PC-9 (cell line): ENCODE measurements at regions of chr15 and their contacts with region 1.

Region 1: DNA sequence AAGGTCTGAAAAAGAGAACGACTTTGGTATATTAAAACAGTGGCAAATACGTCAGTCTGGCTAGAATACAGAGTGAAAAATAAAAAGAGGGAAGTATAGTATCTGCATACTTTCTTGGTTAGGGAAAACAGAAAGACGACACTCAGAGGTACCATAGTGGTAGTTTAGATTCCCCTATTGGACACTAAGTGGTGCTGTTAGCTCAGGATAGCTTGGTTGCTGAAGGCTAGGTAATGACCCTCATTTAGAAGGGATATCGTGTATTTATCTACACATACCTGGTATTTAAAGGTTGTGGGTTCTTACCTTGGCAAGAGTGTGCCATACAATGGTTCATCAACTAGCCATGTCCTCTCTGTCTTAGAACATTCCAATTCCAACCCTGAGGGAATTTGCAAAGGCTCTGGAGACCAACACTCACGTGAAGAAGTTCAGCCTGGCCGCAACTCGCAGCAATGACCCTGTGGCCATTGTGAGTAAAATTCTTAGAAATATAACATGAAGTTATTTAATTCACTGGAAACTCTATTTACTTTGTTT is 31.0 kb downstream of the TMOD2 start:
- DNase-seq: peak; percentile 7 to 52
- H3K4me3 ChIP-seq: no peak overlapping the region
- H3K27ac ChIP-seq: no peak overlapping the region
- H3K4me1 ChIP-seq: peaks cover 17% of the 10 kb centered on the region
- H3K27me3 ChIP-seq: no peaks in the 10 kb centered on the region
- CTCF ChIP-seq: peak; percentile 66

Region 2: DNA sequence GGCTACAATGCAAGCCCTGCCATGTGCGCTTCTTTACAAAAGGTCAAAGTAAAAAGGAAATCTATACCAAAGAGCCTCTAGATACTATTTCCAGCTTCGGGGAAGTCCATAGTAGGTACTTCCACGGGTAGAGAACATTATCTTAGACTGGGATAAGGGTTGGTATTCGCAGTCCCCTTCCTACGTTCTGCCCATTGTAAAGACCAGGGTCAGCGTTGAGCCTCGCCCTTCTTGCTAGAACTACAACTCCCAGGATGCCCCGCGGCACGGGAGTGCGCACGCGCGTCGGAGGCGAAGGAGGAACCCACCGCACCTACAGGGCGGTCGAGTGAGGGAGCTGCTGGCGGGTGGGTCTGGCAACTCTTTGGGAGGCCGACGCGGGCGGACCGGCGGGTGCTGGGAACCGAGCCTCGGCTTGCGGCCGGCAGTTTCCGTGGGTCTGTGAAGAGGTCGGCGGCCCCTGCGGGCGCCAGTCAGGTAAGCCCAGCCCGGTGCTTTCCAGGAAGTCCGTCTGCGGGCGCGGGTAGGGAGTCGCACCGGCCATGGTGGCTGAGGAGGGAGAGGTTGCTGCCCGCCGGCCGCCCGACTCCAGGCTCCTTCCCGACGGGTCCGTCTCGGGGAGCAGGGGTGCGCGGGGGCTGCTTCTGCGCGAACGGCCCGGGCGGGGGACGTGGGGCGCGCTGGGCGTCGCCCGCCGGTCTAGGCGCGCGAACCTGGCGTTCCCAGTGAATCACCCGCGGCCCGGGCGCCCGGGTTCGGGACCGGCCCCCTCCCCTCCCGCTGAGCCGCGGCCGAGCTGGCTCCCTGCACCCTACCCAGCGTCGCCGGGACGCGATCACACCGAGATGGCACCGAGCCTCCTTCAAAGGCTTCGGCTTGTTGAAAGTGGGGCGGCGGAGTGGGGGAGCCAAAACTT is 47.2 kb after region 1 on chr15 and contains the start of gene TMOD3:
- CTCF ChIA-PET with region 1: interaction called, 5 read pairs
- POLR2A ChIA-PET with region 1: interaction called, 13 read pairs
- intact Hi-C with region 1: loop called (anchors 1 kb)
- DNase-seq: peak; percentile 77 to 91
- H3K4me3 ChIP-seq: peak within 1 kb of the TSS; percentile 71
- H3K27ac ChIP-seq: peak within 1 kb of the TSS; percentile 97
- H3K4me1 ChIP-seq: peaks cover 69% of the 10 kb centered on the region
- H3K27me3 ChIP-seq: no peaks in the 10 kb centered on the region
- CTCF ChIP-seq: no peak
- total RNA-seq, gene TMOD3: 94.9 and 125 TPM in 2 replicates

Region 3: GRCh38 chr15:51849860-51850259 is 67.4 kb after region 1 on chr15:
- CTCF ChIA-PET with region 1: no interaction called
- POLR2A ChIA-PET with region 1: no interaction called
- intact Hi-C with region 1: no loop called
- DNase-seq: no peak
- H3K4me3 ChIP-seq: no peak overlapping the region
- H3K27ac ChIP-seq: no peak overlapping the region
- H3K4me1 ChIP-seq: peaks cover 32% of the 10 kb centered on the region
- H3K27me3 ChIP-seq: no peaks in the 10 kb centered on the region
- CTCF ChIP-seq: no peak

Region 4: GRCh38 chr15:51907136-51907914 is 124.9 kb after region 1 on chr15:
- CTCF ChIA-PET with region 1: interaction called, 8 read pairs
- POLR2A ChIA-PET with region 1: no interaction called
- intact Hi-C with region 1: loop called (anchors 1 kb)
- DNase-seq: peak; percentile 83 to 97
- H3K4me3 ChIP-seq: peak overlapping the region; percentile 26; the same call in 1 of the 2 replicates
- H3K27ac ChIP-seq: peak overlapping the region; percentile 69
- H3K4me1 ChIP-seq: peaks cover 27% of the 10 kb centered on the region
- H3K27me3 ChIP-seq: no peaks in the 10 kb centered on the region
- CTCF ChIP-seq: peak; percentile 60

Region 5: DNA sequence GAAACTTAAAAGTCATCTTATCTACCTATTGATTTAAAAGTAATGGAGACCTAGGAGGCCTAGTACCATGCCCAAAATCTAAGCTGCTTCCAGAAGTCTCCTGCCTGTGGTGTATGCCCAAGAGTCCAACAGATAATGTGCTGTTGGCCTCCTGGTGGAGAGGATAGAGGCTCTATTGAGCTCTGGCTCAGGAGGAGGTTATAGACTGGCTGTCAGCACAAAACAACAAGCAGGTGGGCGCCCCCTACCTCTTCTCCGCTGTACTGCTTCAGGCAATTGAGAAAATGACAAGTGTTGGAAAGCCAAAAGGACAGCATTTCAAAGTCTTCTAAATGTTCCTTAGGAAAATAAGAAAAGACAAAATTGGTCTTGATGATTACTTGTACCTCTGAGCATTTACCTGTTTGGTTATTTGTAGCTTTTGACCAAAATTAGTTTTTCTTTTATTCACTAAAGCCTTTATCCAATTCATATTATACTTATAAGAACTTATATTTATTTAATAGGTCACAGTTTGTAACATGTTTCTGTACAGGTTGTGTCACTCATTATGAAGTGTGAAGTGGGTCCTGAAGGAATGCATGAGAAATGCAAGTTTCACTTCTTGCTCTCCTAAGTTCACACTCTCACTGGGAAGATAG is 426.0 kb after region 1 on chr15:
- CTCF ChIA-PET with region 1: no interaction called
- POLR2A ChIA-PET with region 1: no interaction called
- intact Hi-C with region 1: loop called (anchors 10 kb)
- DNase-seq: peak; percentile 36 to 55
- H3K4me3 ChIP-seq: no peak overlapping the region
- H3K27ac ChIP-seq: no peak overlapping the region
- H3K4me1 ChIP-seq: no peaks in the 10 kb centered on the region
- H3K27me3 ChIP-seq: no peaks in the 10 kb centered on the region
- CTCF ChIP-seq: peak; percentile 81

Region 6: GRCh38 chr15:52735231-52736089 is 953.0 kb after region 1 on chr15:
- CTCF ChIA-PET with region 1: no interaction called
- POLR2A ChIA-PET with region 1: no interaction called
- intact Hi-C with region 1: loop called (anchors 10 kb)
- DNase-seq: peak; percentile 68 to 69
- H3K4me3 ChIP-seq: no peak overlapping the region
- H3K27ac ChIP-seq: no peak overlapping the region
- H3K4me1 ChIP-seq: peaks cover 13% of the 10 kb centered on the region
- H3K27me3 ChIP-seq: no peaks in the 10 kb centered on the region
- CTCF ChIP-seq: peak; percentile 84